A673 (cell line): ENCODE measurements at regions of chr11 and their contacts with region 1.

Region 1: GRCh38 chr11:117443266-117444195 is 115.9 kb downstream of the CEP164 start:
- DNase-seq: peak; percentile 31
- H3K4me3 ChIP-seq: no peak overlapping the region
- H3K27ac ChIP-seq: no peak overlapping the region
- H3K4me1 ChIP-seq: no peaks in the 10 kb centered on the region
- H3K27me3 ChIP-seq: peaks cover 4% of the 10 kb centered on the region
- CTCF ChIP-seq: peak; percentile 50

Region 2: GRCh38 chr11:116386118-116386699 is 1057.3 kb before region 1 on chr11:
- CTCF ChIA-PET with region 1: no interaction called
- POLR2A ChIA-PET with region 1: no interaction called
- intact Hi-C with region 1: no loop called
- DNase-seq: no peak
- H3K4me3 ChIP-seq: no peak overlapping the region
- H3K27ac ChIP-seq: no peak overlapping the region
- H3K4me1 ChIP-seq: no peaks in the 10 kb centered on the region
- H3K27me3 ChIP-seq: peaks cover 11% of the 10 kb centered on the region
- CTCF ChIP-seq: no peak

Region 3: GRCh38 chr11:117316197-117316961 is 127.2 kb before region 1 on chr11 and contains the start of gene BACE1:
- CTCF ChIA-PET with region 1: no interaction called
- POLR2A ChIA-PET with region 1: no interaction called
- intact Hi-C with region 1: no loop called
- DNase-seq: peak; percentile 93
- H3K4me3 ChIP-seq: peak within 1 kb of the TSS; percentile 84
- H3K27ac ChIP-seq: peak within 1 kb of the TSS; percentile 55
- H3K4me1 ChIP-seq: peaks cover 3% of the 10 kb centered on the region
- H3K27me3 ChIP-seq: no peaks in the 10 kb centered on the region
- CTCF ChIP-seq: peak; percentile 58
- total RNA-seq, gene BACE1: 13.7 and 15.0 TPM in 2 replicates

Region 4: DNA sequence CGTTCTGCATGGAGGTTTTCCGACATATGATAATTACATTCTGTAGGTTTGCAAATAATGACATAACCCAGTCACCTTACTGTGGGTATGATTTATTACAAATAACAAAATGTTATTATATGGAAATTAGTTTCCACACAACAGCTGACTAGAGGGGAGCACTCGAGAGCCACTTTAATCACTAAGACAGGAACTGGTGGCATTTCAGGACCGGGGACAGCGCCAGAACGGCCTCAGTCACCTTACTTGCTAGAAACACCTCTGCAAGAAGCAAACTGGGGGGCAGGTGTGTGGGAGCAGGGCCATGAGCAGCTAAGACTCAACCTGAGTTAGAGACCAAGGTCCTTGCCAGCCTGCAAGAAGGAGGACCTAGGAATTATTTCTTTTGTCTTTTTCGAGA is 153.5 kb after region 1 on chr11:
- CTCF ChIA-PET with region 1: no interaction called
- POLR2A ChIA-PET with region 1: no interaction called
- intact Hi-C with region 1: loop called (anchors 5 kb)
- DNase-seq: peak; percentile 41
- H3K4me3 ChIP-seq: no peak overlapping the region
- H3K27ac ChIP-seq: no peak overlapping the region
- H3K4me1 ChIP-seq: no peaks in the 10 kb centered on the region
- H3K27me3 ChIP-seq: peaks cover 10% of the 10 kb centered on the region
- CTCF ChIP-seq: no peak